ENCODE measurements at regions of chr2 and their contacts with region 1.

Region 1: GRCh38 chr2:134454931-134455330 is 201.1 kb downstream of the MGAT5 start:
- DNase-seq: no peak
- ATAC-seq: no peak
- H3K4me3 ChIP-seq: no peak overlapping the region
- H3K27ac ChIP-seq: no peak overlapping the region
- H3K4me1 ChIP-seq: no peaks in the 10 kb centered on the region
- CTCF ChIP-seq: no peak
- EP300 ChIP-seq: no peak
- POLR2A ChIP-seq: no peak
- RAD21 ChIP-seq: no peak

Region 2: DNA sequence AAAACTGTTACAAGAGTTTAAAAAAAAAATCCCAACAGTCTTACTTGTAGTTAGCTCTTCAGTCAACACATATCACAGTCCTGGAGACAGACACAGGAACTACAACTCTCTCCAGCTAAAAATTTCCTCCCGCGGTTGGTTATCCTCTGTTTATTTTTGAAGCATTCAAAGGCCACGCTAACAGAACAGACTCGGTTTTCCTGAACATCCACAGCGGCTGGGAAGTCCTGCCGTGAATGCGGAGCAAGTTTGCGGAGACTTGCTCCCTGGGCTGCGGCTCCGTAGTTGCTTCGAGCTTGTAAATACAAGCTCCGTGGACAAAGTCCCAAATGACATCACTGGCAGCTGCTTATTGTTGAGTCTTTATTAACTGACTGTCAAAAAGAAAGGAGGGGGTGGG is 886.8 kb before region 1 on chr2 and contains the start of gene NCKAP5:
- CTCF ChIA-PET with region 1: no interaction called
- POLR2A ChIA-PET with region 1: no interaction called
- DNase-seq: peak; percentile 38 to 42
- ATAC-seq: peak; percentile 79 to 84; a peak in 5 of 6 replicates
- H3K4me3 ChIP-seq: peak within 1 kb of the TSS; percentile 35
- H3K27ac ChIP-seq: peak within 1 kb of the TSS; percentile 26 to 75
- H3K4me1 ChIP-seq: peaks cover 31% of the 10 kb centered on the region
- CTCF ChIP-seq: no peak
- EP300 ChIP-seq: no peak
- POLR2A ChIP-seq: no peak
- RAD21 ChIP-seq: no peak
- polyA plus RNA-seq, gene NCKAP5: 2.9 and 3.0 TPM in 2 replicates

Region 3: DNA sequence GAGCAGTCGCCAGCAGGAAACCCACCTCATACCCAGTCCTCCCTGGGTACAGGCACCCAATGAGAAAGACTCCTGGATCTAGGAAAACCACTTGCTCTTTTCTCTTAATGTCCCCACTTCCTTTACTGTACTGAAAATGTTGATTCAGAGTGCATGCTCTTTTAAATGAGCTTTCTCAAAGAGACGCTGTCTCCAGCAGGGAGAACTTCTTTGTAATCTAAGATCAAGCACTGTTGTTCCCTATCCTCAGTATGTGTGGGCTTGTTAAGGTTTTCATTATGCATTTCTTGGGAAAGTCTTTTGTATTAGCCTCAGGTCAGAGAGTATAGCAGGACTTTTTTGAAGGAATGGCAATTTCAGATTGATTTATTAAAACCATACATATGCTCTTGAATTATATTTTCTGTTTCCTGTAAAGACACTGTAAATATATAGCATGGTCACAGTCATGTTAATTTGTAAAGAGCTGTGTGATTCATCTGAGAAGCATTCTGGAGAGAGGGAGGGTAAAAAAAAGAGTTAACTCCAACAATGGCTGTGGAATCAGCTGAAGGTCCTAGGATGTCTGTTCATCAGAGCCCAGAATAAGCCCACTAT is 23.0 kb before region 1 on chr2:
- CTCF ChIA-PET with region 1: interaction called, 17 read pairs
- POLR2A ChIA-PET with region 1: no interaction called
- DNase-seq: peak; percentile 13 to 51
- ATAC-seq: peak; percentile 72 to 81
- H3K4me3 ChIP-seq: no peak overlapping the region
- H3K27ac ChIP-seq: peak overlapping the region; percentile 79 to 80
- H3K4me1 ChIP-seq: peaks cover 33% of the 10 kb centered on the region
- CTCF ChIP-seq: no peak
- EP300 ChIP-seq: no peak
- POLR2A ChIP-seq: no peak
- RAD21 ChIP-seq: no peak

Region 4: DNA sequence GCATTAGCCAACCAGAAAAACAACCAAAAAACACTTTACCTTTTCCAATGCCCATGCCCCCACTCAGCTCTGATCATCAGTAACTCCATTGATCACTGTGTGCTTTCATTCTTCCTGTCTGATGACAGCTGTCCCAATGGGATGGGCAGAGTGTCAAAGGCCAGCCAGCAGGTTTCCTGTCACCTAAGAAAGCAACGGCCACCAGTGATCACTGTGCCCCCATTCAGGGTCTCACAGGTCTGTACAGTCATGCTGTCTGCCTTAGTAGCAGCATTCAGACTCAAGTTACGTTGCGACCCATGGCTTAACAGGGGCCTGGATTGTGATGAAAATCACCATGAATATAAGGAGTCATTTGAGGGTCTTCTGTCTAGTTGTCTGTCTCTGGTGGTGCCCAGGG is 16.6 kb before region 1 on chr2:
- CTCF ChIA-PET with region 1: interaction called, 27 read pairs
- POLR2A ChIA-PET with region 1: no interaction called
- DNase-seq: no peak
- ATAC-seq: no peak
- H3K4me3 ChIP-seq: no peak overlapping the region
- H3K27ac ChIP-seq: no peak overlapping the region
- H3K4me1 ChIP-seq: peaks cover 6% of the 10 kb centered on the region
- CTCF ChIP-seq: no peak
- EP300 ChIP-seq: no peak
- POLR2A ChIP-seq: no peak
- RAD21 ChIP-seq: no peak

Region 5: DNA sequence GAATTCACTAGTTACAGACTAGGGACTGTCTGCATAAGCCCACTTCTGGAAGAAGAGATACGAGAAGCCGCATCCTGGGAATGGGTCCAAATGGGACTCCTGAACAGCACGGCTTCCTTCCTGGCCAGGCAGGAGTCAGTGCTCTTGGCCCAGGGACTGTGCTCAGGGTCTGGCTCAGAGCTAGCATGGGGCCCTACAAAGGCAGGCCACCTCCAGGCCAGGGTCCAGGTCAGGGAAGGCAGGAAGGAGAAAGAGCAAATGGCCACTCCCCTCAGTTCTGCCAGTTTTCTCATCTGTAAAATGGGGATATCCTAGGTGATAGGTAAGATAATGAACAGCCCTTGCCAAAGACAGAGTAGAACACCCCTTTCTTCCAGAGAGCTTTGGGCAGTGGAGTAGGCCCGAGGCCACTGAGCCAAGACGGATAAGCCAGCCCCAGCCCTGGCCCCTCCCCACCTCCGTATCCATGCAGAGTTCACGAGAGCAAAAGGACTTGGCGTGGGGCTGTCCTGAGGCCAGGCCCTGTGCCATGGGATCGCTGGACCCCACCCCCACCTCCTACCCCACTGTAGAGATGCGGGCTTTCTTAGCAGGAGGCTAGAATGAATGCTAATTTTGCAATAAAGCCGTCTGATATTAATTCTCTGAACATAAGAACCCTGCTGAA is 11.0 kb before region 1 on chr2:
- CTCF ChIA-PET with region 1: interaction called, 41 read pairs
- POLR2A ChIA-PET with region 1: no interaction called
- DNase-seq: no peak
- ATAC-seq: no peak
- H3K4me3 ChIP-seq: no peak overlapping the region
- H3K27ac ChIP-seq: no peak overlapping the region
- H3K4me1 ChIP-seq: no peaks in the 10 kb centered on the region; the same call in 2 of the 3 replicates
- CTCF ChIP-seq: no peak
- EP300 ChIP-seq: no peak
- POLR2A ChIP-seq: no peak
- RAD21 ChIP-seq: no peak

Region 6: GRCh38 chr2:134819334-134819733 is 364.4 kb after region 1 on chr2:
- CTCF ChIA-PET with region 1: no interaction called
- POLR2A ChIA-PET with region 1: no interaction called
- DNase-seq: peak; percentile 20 to 38
- ATAC-seq: peak; percentile 47 to 51; a peak in 2 of 6 replicates
- H3K4me3 ChIP-seq: no peak overlapping the region
- H3K27ac ChIP-seq: no peak overlapping the region
- H3K4me1 ChIP-seq: 0 out of 3 replicates have a peak, but pooled peaks cover 3% of the 10 kb centered on the region
- CTCF ChIP-seq: no peak
- EP300 ChIP-seq: no peak
- POLR2A ChIP-seq: no peak
- RAD21 ChIP-seq: no peak